ENCODE measurements at regions of chr21 and their contacts with region 1.

Region 1: DNA sequence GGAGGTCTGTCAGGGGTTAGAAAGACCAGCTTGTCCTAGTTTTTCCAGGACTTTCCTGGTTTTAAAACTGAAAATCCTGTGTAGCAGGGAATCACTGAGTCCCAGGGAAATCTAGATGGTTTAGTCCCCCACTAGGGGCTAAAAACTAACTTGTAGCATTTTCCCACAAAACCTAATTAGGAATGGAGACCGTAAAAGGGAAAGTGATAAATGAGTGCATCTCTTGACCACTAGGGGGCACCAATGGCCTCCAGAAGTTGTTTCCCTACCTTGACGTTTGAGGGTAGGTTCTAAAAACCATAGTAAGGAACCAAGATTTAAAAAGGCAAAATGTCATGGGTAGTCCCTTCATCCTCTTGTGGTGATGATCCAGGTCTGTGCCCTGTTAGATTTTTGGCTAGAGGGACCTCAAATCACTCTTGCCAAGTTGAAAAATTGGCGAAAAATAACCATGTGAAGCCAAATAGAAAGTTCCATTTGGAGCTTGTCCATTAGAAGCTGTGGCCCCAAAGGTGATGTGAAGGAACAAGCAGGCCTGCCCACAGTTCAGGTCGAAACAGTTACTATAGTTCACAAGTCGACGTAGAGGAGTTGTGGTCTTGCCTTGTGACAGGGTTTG is 24.5 kb downstream of the CLIC6 start:
- DNase-seq: peak; percentile 41
- ATAC-seq: peak; percentile 62; the same call in 1 of the 2 replicates
- H3K4me3 ChIP-seq: no peak overlapping the region
- H3K27ac ChIP-seq: no peak overlapping the region
- H3K4me1 ChIP-seq: no peaks in the 10 kb centered on the region
- H3K27me3 ChIP-seq: peaks cover 4% of the 10 kb centered on the region; the same call in 1 of the 2 replicates
- CTCF ChIP-seq: peak; percentile 80

Region 2: DNA sequence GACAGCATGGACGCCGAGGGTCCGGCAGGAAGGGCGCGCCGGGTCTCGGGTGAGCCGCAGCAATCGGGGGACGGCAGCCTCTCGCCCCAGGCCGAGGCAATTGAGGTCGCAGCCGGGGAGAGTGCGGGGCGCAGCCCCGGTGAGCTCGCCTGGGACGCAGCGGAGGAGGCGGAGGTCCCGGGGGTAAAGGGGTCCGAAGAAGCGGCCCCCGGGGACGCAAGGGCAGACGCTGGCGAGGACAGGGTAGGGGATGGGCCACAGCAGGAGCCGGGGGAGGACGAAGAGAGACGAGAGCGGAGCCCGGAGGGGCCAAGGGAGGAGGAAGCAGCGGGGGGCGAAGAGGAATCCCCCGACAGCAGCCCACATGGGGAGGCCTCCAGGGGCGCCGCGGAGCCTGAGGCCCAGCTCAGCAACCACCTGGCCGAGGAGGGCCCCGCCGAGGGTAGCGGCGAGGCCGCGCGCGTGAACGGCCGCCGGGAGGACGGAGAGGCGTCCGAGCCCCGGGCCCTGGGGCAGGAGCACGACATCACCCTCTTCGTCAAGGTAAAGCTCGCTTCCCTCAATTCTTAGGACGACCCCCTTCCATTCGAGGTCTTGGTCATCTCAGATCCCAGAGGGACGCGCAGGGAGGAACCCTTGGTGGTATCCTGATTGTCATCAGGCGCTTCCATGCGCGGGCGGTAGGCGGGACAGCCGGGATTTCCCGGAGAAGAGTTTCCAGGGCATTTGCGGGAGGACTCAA is 22.9 kb before region 1 on chr21:
- CTCF ChIA-PET with region 1: no interaction called
- POLR2A ChIA-PET with region 1: no interaction called
- in situ Hi-C with region 1: no loop called
- intact Hi-C with region 1: no loop called
- DNase-seq: no peak
- ATAC-seq: peak; percentile 55
- H3K4me3 ChIP-seq: peak overlapping the region; percentile 13 to 37; a peak in 3 of 4 replicates
- H3K27ac ChIP-seq: no peak overlapping the region
- H3K4me1 ChIP-seq: no peaks in the 10 kb centered on the region
- H3K27me3 ChIP-seq: peaks cover 28% of the 10 kb centered on the region
- CTCF ChIP-seq: no peak

Region 3: GRCh38 chr21:34758575-34758974 is 65.3 kb after region 1 on chr21:
- CTCF ChIA-PET with region 1: interaction called, 10 read pairs
- POLR2A ChIA-PET with region 1: no interaction called
- in situ Hi-C with region 1: no loop called
- intact Hi-C with region 1: no loop called
- DNase-seq: no peak
- ATAC-seq: no peak
- H3K4me3 ChIP-seq: no peak overlapping the region
- H3K27ac ChIP-seq: no peak overlapping the region
- H3K4me1 ChIP-seq: no peaks in the 10 kb centered on the region
- H3K27me3 ChIP-seq: no peaks in the 10 kb centered on the region
- CTCF ChIP-seq: no peak